ENCODE measurements at regions of chr6 and their contacts with region 1.

Region 1: DNA sequence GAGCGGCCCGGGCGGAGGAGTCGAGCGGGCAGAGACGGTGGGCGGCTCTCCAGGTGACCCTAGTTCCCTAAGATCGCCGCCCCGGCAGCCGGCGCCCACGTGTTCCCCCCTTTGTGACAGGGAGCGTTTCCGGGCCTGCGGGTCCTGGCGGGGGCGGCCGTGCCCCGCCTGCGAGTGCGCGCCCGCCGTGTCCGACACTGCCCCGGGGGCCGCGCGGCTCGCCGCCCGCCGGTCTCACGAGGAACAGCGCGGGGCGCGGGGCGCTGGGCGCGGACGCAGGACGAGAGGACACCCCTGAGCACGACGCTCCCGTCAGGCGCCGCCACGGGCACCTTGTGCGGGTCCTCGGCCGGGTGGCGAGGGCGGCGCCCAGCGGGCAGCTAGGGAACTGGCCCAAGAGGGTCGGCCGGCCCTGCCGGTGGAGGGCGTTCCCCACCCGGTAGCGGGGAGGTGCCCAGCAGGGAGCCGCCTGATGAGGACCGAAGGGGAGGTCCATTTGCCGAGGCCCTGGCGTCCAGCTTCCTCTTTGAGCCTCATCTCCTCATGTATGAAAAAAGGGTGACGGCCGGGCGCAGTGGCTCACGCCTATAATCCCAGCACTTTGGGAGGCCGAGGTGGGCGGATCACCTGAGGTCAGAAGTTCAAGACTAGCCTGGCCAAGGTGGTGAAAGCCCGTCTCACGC is at the start of gene VARS1:
- DNase-seq: peak; percentile 93
- H3K4me3 Mint-ChIP-seq: peak within 1 kb of the TSS; percentile 99
- H3K27ac Mint-ChIP-seq: peak within 1 kb of the TSS; percentile 98
- H3K4me1 Mint-ChIP-seq: peaks cover 27% of the 10 kb centered on the region
- H3K27me3 Mint-ChIP-seq: no peaks in the 10 kb centered on the region
- CTCF ChIP-seq: peak; percentile 69
- total RNA-seq, gene VARS1: 133 and 200 TPM in 2 replicates

Region 2: GRCh38 chr6:31729515-31729978 is 66.2 kb before region 1 on chr6:
- CTCF ChIA-PET with region 1: interaction called, 3 read pairs
- POLR2A ChIA-PET with region 1: interaction called, 30 read pairs
- intact Hi-C with region 1: loop called (anchors 2 kb)
- DNase-seq: peak; percentile 88
- H3K4me3 Mint-ChIP-seq: peak overlapping the region; percentile 92
- H3K27ac Mint-ChIP-seq: peak overlapping the region; percentile 86
- H3K4me1 Mint-ChIP-seq: peaks cover 7% of the 10 kb centered on the region
- H3K27me3 Mint-ChIP-seq: no peaks in the 10 kb centered on the region
- CTCF ChIP-seq: no peak

Region 3: DNA sequence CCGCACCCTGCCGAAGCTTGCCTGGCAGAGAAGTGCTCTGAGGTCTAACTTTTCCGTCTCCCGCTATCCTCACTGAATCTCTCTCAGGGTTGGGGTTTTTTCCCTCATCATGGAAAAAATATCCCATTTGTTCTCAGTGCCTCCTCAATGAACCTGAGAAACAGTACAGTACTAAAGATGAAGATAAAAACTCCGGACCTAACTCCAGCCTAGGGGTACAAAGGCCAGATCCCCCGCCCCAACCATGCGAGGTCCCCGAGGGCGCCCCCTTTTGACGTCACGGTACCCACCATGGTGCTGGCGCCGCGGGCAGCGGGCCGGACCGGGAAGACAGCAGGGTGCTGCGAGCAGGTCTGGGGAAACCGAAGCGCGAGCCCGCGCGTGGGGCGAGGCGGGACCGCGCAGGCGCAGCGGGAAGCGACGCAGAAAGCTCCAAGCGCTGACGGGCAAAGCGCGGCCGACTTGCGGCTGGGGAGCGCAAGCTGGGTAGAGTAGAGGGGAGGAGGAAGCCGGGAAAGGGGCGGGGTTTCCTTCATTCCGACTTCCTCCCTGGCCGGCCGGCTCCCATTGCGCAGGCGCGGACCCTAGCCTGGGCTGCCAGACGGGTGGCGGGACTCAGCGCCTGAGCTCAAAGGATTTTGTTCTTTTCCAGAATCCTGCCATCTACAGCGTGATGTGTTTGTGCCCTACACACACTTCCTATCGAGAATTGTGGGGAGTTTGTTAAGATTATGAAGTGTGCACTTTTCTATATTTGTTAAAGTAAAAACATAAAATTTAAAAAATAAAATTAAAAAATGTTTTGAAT is 10.9 kb after region 1 on chr6 and contains the start of gene LSM2:
- CTCF ChIA-PET with region 1: interaction called, 22 read pairs
- POLR2A ChIA-PET with region 1: interaction called, 60 read pairs
- intact Hi-C with region 1: no loop called
- DNase-seq: peak; percentile 98
- H3K4me3 Mint-ChIP-seq: peak within 1 kb of the TSS; percentile 82
- H3K27ac Mint-ChIP-seq: peak within 1 kb of the TSS; percentile 84
- H3K4me1 Mint-ChIP-seq: peaks cover 6% of the 10 kb centered on the region
- H3K27me3 Mint-ChIP-seq: no peaks in the 10 kb centered on the region
- CTCF ChIP-seq: peak; percentile 27
- total RNA-seq, gene LSM2: 36.9 and 47.4 TPM in 2 replicates

Region 4: GRCh38 chr6:31822036-31822821 is 26.5 kb after region 1 on chr6:
- CTCF ChIA-PET with region 1: interaction called, 9 read pairs
- POLR2A ChIA-PET with region 1: interaction called, 77 read pairs
- intact Hi-C with region 1: no loop called
- DNase-seq: peak; percentile 94
- H3K4me3 Mint-ChIP-seq: peak overlapping the region; percentile 91
- H3K27ac Mint-ChIP-seq: peak overlapping the region; percentile 99
- H3K4me1 Mint-ChIP-seq: peaks cover 29% of the 10 kb centered on the region
- H3K27me3 Mint-ChIP-seq: no peaks in the 10 kb centered on the region
- CTCF ChIP-seq: no peak

Region 5: GRCh38 chr6:31882344-31882743 is 86.6 kb after region 1 on chr6:
- CTCF ChIA-PET with region 1: no interaction called
- POLR2A ChIA-PET with region 1: no interaction called
- intact Hi-C with region 1: no loop called
- DNase-seq: no peak
- H3K4me3 Mint-ChIP-seq: no peak overlapping the region
- H3K27ac Mint-ChIP-seq: no peak overlapping the region
- H3K4me1 Mint-ChIP-seq: no peaks in the 10 kb centered on the region
- H3K27me3 Mint-ChIP-seq: no peaks in the 10 kb centered on the region
- CTCF ChIP-seq: no peak